Activated CD4-positive, alpha-beta T cell treated with anti-CD3 and anti-CD28 coated beads, Interleukin-2, amount 10 ng/mL, durations not matched to agents 24 days and 14 days (primary cell): ENCODE measurements at regions of chr12 and their contacts with region 1.

Region 1: GRCh38 chr12:93677195-93678064 is at the start of gene CRADD:
- DNase-seq: peak; percentile 96
- H3K4me3 Mint-ChIP-seq: peak within 1 kb of the TSS; percentile 96
- H3K27ac Mint-ChIP-seq: peak within 1 kb of the TSS; percentile 99
- H3K4me1 Mint-ChIP-seq: peaks cover 37% of the 10 kb centered on the region
- H3K27me3 Mint-ChIP-seq: peaks cover 4% of the 10 kb centered on the region
- total RNA-seq, gene CRADD: 8.1 and 12.6 TPM in 2 replicates

Region 2: DNA sequence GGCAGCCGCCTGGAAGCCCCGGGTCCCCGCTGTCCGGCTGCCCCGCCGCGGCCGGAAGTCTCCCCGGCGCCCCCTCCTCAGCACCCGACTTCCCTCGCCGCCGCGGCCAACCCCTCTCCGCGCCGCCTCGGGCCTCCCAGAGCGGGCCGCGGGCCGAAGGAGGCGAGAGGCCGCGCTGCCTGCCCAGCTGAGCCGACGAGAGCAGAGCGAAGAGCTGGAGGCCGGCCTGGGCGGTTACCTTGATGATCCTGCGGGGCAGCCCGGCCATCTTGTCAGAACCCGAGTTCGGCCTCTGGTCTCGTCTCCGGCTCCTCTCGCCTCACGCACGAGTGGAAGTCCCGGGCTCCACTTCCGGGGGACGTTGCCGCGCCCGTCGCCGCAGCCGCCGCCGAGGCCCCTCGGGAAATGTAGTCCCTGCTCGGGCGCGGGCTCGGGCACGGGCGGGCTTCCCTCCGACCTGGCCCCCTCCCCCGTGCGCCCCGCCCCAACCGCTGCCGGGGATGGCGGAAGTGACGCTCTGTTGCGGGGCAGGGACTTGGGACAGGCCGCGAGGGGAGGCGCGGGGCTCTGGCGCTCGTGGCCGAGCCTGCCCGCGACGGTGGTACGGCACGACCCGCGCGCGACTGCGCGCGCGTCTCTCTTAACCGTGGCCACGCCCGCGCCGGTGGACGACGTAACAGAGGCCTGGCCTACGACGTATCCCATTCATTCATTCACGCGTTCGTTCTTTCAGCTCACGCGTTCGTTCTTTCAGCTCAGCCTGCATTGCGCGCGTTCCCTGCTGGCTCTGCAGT is 235.6 kb before region 1 on chr12 and contains the start of gene UBE2N:
- intact Hi-C with region 1: loop called (anchors 1 kb)
- DNase-seq: peak; percentile 99
- H3K4me3 Mint-ChIP-seq: peak within 1 kb of the TSS; percentile 94
- H3K27ac Mint-ChIP-seq: peak within 1 kb of the TSS; percentile 97
- H3K4me1 Mint-ChIP-seq: peaks cover 43% of the 10 kb centered on the region
- H3K27me3 Mint-ChIP-seq: no peaks in the 10 kb centered on the region
- total RNA-seq, gene UBE2N: 225 and 243 TPM in 2 replicates

Region 3: GRCh38 chr12:93467351-93468007 is 210.0 kb before region 1 on chr12 and contains the start of gene MRPL42:
- intact Hi-C with region 1: loop called (anchors 1 kb)
- DNase-seq: peak; percentile 99
- H3K4me3 Mint-ChIP-seq: peak within 1 kb of the TSS; percentile 91
- H3K27ac Mint-ChIP-seq: peak within 1 kb of the TSS; percentile 93
- H3K4me1 Mint-ChIP-seq: peaks cover 29% of the 10 kb centered on the region
- H3K27me3 Mint-ChIP-seq: no peaks in the 10 kb centered on the region
- total RNA-seq, gene MRPL42: 92.4 and 96.0 TPM in 2 replicates

Region 4: DNA sequence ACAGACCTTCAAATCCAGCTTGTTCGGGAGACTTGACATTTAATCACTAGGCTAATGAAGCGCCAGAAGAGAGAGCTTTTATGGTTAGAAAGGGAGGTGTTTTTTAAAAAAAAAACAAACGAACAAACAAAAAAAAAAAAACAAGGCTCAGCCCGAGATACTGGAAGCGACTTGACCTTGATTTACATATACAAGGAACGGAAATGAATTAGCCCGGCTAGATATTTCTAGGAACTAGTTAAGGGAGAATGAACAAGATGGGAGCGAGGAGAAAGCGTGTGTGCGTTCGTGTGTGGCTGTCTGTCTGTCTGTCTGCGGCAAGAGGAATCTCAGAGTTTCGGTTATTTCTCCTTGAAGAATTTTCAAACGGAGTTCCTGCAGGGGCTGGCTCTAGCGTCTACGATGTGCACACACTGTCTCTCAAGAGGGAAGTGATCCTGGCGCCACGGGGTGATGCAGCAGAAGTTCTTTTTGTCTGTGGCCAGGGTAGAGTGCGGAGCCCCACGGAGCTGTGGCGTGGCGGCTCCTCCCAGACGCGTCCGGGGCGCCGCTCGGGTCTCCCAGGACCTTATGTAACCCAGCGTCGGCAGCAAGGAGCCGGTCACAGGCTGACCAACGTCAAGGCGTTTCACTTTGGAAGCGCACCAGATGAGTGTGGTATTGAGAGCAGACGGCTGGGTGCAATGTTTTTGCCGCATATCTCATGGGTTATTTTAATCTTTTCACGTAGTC is 86.1 kb before region 1 on chr12:
- intact Hi-C with region 1: loop called (anchors 5 kb)
- DNase-seq: peak; percentile 82
- H3K4me3 Mint-ChIP-seq: peak overlapping the region; percentile 92
- H3K27ac Mint-ChIP-seq: peak overlapping the region; percentile 38
- H3K4me1 Mint-ChIP-seq: peaks cover 30% of the 10 kb centered on the region
- H3K27me3 Mint-ChIP-seq: peaks cover 40% of the 10 kb centered on the region

Region 5: GRCh38 chr12:93742110-93742934 is 64.9 kb after region 1 on chr12:
- intact Hi-C with region 1: loop called (anchors 1 kb)
- DNase-seq: peak; percentile 87
- H3K4me3 Mint-ChIP-seq: peak overlapping the region; percentile 91
- H3K27ac Mint-ChIP-seq: peak overlapping the region; percentile 91
- H3K4me1 Mint-ChIP-seq: peaks cover 26% of the 10 kb centered on the region
- H3K27me3 Mint-ChIP-seq: no peaks in the 10 kb centered on the region

Region 6: DNA sequence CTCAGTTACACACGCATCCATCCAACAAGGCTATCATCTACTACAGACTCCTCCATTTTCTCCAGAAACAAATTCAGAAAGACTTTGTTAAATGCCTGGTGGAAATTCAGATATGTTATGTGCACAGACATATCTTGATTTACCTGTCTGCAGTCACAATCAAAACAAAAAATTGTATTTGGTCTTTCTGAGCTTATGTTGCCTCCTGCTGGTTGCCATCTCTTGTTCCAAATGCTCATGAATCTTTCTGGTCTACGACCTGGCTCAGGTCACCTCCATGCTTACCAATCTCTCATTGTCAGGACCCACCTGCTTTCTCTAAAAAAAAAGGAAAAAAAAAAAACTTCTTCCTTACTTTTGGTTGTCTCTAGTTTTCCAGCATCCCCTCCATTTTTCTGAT is 301.8 kb after region 1 on chr12:
- intact Hi-C with region 1: loop called (anchors 2 kb)
- DNase-seq: peak; percentile 80
- H3K4me3 Mint-ChIP-seq: no peak overlapping the region
- H3K27ac Mint-ChIP-seq: no peak overlapping the region
- H3K4me1 Mint-ChIP-seq: peaks cover 34% of the 10 kb centered on the region
- H3K27me3 Mint-ChIP-seq: peaks cover 6% of the 10 kb centered on the region

Region 7: GRCh38 chr12:94469522-94469921 is 792.1 kb after region 1 on chr12:
- intact Hi-C with region 1: no loop called
- DNase-seq: no peak
- H3K4me3 Mint-ChIP-seq: no peak overlapping the region
- H3K27ac Mint-ChIP-seq: no peak overlapping the region
- H3K4me1 Mint-ChIP-seq: no peaks in the 10 kb centered on the region
- H3K27me3 Mint-ChIP-seq: peaks cover 7% of the 10 kb centered on the region